ENCODE measurements at regions of chr1 and their contacts with region 1.

Region 1: DNA sequence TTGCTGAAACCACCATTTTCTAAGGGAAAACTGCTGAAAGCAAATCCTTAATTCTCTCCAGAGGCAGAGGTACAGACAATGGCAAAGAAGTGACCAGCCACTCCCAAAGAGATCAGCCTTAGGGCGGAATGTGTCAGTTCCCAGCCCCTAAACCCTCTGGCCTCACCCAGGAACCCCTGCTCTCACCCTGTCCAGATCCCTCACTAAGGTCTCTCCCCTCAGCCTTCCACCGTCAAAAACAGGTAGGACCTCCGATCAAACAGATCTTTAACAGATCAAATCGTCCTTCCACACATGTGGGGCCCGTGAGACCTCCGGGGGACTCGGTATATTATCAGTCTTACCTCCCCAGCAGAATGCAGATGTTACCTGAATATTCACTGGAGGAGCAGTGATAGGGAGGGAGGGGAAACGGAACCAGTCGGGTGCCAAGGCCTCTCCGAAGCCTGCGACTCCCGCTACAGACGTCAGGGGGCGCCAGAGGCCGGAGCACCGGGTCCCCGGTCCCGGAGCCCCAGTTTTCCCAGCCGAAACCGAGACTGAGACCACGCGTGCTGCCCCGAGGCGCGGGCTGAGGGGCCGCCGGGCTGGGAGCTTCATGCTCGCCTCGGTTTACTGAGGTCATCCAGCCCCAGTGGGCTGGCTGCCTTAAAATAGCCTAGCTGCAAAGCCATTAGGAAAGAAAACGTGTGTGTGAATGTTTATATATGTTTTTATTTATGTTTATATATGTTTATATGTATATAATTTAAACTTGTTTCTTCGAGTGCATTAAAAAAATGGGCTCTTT is 23.6 kb downstream of the GPA33 start:
- DNase-seq: peak; percentile 87
- ATAC-seq: peak; percentile 97
- H3K4me3 ChIP-seq: peak overlapping the region; percentile 64
- H3K27ac ChIP-seq: no peak overlapping the region
- H3K4me1 ChIP-seq: no peaks in the 10 kb centered on the region
- H3K27me3 ChIP-seq: no peaks in the 10 kb centered on the region
- CTCF ChIP-seq: peak; percentile 98

Region 2: GRCh38 chr1:166910396-166910994 is 156.0 kb before region 1 on chr1:
- CTCF ChIA-PET with region 1: interaction called, 8 read pairs
- POLR2A ChIA-PET with region 1: interaction called, 10 read pairs
- intact Hi-C with region 1: no loop called
- DNase-seq: peak; percentile 97
- ATAC-seq: peak; percentile 93
- H3K4me3 ChIP-seq: no peak overlapping the region
- H3K27ac ChIP-seq: no peak overlapping the region
- H3K4me1 ChIP-seq: peaks cover 21% of the 10 kb centered on the region
- H3K27me3 ChIP-seq: no peaks in the 10 kb centered on the region
- CTCF ChIP-seq: peak; percentile 93

Region 3: DNA sequence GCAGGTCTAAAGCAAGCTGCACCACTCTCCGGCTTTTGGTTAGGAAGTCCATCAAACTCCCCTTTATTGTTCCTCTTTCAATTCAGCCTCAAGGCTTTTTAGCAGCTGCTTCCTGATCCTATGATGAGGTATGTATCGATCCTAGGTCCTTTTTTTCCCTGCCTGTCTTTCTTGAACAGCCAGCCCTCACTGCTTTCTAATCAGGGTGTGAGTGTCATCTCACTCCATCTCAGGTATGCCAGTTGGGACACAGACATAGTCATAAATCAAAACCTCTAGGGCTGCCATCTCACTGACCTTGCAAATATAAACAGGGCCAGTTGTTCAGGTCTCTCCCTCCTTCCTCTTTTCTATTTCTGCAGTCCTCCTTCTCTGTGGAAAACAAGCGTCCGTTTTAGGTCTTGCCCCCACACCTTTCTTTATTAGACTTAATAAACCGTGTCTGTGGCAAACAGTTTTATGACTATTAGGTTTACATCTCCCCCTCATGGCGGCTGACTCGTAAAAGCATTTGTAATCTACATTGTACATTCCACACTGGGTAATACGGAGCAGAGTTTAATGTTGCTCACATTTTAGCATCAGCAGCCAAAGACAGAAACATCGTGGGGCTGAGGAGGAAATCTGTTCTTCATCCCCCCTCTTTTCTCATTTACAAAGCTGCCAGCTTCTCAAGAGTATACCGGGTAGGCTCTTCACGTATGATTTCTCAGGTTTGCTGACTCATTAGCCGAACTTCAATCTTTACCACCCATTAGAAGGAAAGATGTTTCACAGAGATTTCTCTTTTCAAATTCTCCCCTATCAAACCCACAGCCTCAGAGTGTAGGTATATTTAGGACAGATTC is 39.0 kb after region 1 on chr1:
- CTCF ChIA-PET with region 1: no interaction called
- POLR2A ChIA-PET with region 1: no interaction called
- intact Hi-C with region 1: loop called (anchors 5 kb)
- DNase-seq: peak; percentile 62
- ATAC-seq: peak; percentile 41
- H3K4me3 ChIP-seq: peak overlapping the region; percentile 16; the same call in 1 of the 2 replicates
- H3K27ac ChIP-seq: peak overlapping the region; percentile 36
- H3K4me1 ChIP-seq: peaks cover 54% of the 10 kb centered on the region
- H3K27me3 ChIP-seq: no peaks in the 10 kb centered on the region
- CTCF ChIP-seq: peak; percentile 33; the same call in 1 of the 2 replicates

Region 4: DNA sequence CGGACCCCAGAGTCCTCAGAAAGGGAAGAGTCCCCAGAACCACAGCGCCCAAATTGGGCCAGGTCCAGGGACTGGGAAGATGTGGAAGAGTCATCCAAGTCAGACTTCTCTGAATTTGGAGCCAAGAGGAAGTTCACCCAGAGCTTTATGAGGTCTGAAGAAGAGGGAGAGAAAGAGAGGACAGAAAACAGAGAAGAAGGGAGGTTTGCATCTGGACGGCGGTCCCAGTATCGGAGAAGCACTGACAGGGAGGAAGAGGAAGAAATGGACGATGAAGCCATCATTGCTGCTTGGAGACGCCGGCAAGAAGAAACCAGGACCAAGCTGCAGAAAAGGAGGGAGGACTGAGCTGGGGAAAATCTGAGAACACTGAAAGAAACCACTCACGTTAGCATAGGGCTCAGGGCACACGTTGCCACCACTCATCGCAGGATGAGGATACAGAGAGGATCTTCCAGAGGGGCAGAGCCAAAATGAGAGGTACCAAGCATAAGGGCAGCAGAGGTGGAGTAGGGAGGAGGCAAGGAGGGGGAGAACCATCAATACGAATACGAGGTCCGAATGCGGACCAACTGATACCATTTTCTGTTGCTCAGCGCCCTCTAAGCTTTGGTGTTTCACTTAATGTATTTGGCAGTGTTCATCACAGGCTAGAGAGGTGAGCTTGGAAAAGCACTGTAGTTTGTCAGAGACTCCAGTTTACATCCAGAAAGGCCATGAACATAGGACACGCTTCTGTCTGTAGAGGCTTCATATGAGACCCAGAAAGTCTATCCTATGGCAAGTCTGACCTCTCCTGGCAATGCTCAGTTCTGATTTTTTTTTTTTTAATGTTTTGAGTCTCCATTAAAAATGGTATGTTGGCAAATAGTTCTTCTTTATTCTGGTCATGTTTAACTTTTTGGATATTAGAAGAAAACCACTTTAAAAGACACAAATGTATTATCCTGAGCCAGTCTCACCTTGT is 62.0 kb after region 1 on chr1:
- CTCF ChIA-PET with region 1: interaction called, 3 read pairs
- POLR2A ChIA-PET with region 1: no interaction called
- intact Hi-C with region 1: loop called (anchors 1 kb)
- DNase-seq: peak; percentile 50
- ATAC-seq: peak; percentile 51
- H3K4me3 ChIP-seq: no peak overlapping the region
- H3K27ac ChIP-seq: no peak overlapping the region
- H3K4me1 ChIP-seq: no peaks in the 10 kb centered on the region
- H3K27me3 ChIP-seq: peaks cover 6% of the 10 kb centered on the region; the same call in 1 of the 2 replicates
- CTCF ChIP-seq: peak; percentile 60; the same call in 1 of the 2 replicates

Region 5: GRCh38 chr1:167342846-167343245 is 276.3 kb after region 1 on chr1:
- CTCF ChIA-PET with region 1: no interaction called
- POLR2A ChIA-PET with region 1: no interaction called
- intact Hi-C with region 1: loop called (anchors 1 kb)
- DNase-seq: peak; percentile 58
- ATAC-seq: peak; percentile 87
- H3K4me3 ChIP-seq: no peak overlapping the region
- H3K27ac ChIP-seq: no peak overlapping the region
- H3K4me1 ChIP-seq: no peaks in the 10 kb centered on the region
- H3K27me3 ChIP-seq: no peaks in the 10 kb centered on the region
- CTCF ChIP-seq: peak; percentile 60

Region 6: DNA sequence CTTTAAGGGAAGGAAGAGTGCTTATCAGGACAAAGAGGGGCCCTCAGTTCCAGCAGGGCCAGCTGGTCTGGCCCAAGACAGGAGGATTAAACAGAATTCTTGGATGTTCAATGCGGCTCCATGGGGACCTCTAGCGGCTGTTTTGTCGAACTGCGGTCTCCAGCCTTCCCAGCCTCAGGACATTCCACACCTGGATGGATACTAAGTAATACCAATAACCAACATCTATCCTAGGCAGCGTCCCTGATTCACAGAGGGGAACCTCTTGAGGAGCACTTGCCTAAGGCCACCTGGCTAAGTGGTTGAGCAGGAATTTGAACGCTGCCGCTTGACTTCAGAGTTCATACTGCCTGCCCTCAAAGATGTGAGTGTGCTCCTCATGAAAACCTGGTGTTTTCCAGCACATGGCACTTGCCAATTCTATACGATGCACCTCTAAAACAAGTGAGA is 467.3 kb after region 1 on chr1:
- CTCF ChIA-PET with region 1: no interaction called
- POLR2A ChIA-PET with region 1: no interaction called
- intact Hi-C with region 1: loop called (anchors 5 kb)
- DNase-seq: peak; percentile 90
- ATAC-seq: peak; percentile 98
- H3K4me3 ChIP-seq: no peak overlapping the region
- H3K27ac ChIP-seq: no peak overlapping the region
- H3K4me1 ChIP-seq: no peaks in the 10 kb centered on the region
- H3K27me3 ChIP-seq: 0 out of 2 replicates have a peak, but pooled peaks cover 5% of the 10 kb centered on the region
- CTCF ChIP-seq: peak; percentile 97

Measured in PC-3 (cell line).